K562 (cell line): ENCODE measurements at regions of chr1 and their contacts with region 1.

Region 1: DNA sequence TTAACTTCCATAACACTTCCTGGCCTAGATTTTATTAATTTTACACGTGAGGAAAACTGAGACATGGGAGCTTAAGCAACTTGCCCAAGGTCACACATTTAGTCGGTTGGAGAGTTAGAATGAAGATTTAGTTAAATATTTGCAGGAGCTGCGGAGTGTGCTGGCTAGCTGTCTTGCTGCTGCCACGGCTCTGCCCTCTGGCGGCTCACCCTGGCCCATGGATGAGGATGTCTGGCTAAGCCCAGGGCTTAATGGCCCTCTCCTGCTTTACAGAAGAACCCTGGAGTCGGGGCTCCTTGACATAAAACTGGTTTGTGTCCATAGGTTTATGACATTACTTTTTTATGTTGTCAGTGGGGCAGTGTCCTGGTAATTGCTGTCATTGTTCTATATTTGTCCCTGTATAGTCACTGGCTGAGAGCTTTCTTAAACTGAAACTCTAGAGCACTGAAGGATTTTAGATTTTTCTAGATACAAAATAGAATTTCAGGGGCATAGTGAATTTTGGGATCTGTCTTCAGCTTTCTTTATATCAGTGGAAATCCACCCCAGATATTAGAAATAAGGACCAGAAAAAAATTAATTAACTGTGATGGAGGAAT is 88.9 kb upstream of the WLS start:
- DNase-seq: peak; percentile 13 to 39 (median 26)
- ATAC-seq: peak; percentile 90
- H3K4me3 ChIP-seq: no peak overlapping the region
- H3K27ac ChIP-seq: no peak overlapping the region
- H3K4me1 ChIP-seq: no peaks in the 10 kb centered on the region
- H3K27me3 ChIP-seq: peaks cover 0 to 4% of the 10 kb centered on the region in 2 experiments; a peak in 2 of 5 replicates
- CTCF ChIP-seq: peak; percentile 50 to 57 (median 56); a peak in 5 of 6 replicates
- EP300 ChIP-seq: no peak
- POLR2A ChIP-seq: no peak
- RAD21 ChIP-seq: peak; percentile 63 to 66

Region 2: GRCh38 chr1:68120136-68120791 is 200.9 kb before region 1 on chr1:
- CTCF ChIA-PET with region 1: interaction called, 6 read pairs
- POLR2A ChIA-PET with region 1: interaction called, 3 read pairs
- in situ Hi-C with region 1: no loop called
- intact Hi-C with region 1: loop called (anchors 5 kb)
- DNase-seq: peak; percentile 55 to 70 (median 66)
- ATAC-seq: peak; percentile 85
- H3K4me3 ChIP-seq: no peak overlapping the region
- H3K27ac ChIP-seq: no peak overlapping the region
- H3K4me1 ChIP-seq: no peaks in the 10 kb centered on the region
- H3K27me3 ChIP-seq: 0 out of 5 replicates have a peak, but pooled peaks cover 0 to 4% of the 10 kb centered on the region in 2 experiments
- CTCF ChIP-seq: peak; percentile 63 to 85 (median 80)
- EP300 ChIP-seq: no peak
- POLR2A ChIP-seq: no peak
- RAD21 ChIP-seq: peak; percentile 82 to 88

Region 3: DNA sequence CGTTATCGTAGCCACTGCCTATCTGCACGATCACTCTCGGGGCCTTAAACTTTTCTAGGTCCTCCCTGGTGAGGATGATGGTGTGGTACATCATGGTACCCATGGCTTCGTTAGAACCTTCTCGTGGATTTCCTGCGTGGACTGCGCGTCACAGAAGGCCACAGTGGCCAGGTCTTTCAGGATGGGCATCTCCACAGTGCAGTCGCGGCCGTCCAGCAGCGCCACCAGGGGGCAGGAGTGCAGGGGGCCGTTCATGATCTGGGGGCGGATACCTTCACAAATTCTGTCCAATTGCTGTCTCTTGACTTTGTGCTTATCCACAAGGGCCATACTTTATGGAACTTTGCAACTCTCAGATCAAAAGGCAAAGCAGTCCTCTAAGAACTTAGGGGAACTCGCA is 158.4 kb before region 1 on chr1:
- CTCF ChIA-PET with region 1: no interaction called
- POLR2A ChIA-PET with region 1: no interaction called
- in situ Hi-C with region 1: no loop called
- intact Hi-C with region 1: loop called (anchors 1 kb)
- DNase-seq: peak; percentile 10 to 40 (median 18)
- ATAC-seq: peak; percentile 98
- H3K4me3 ChIP-seq: no peak overlapping the region
- H3K27ac ChIP-seq: no peak overlapping the region
- H3K4me1 ChIP-seq: peaks cover 0 to 3% of the 10 kb centered on the region in 2 experiments; a peak in 1 of 5 replicates
- H3K27me3 ChIP-seq: peaks cover 4 to 13% of the 10 kb centered on the region in 2 experiments; a peak in 2 of 5 replicates
- CTCF ChIP-seq: peak; percentile 46 to 67 (median 64)
- EP300 ChIP-seq: no peak
- POLR2A ChIP-seq: no peak
- RAD21 ChIP-seq: peak; percentile 21 to 65; a peak in 3 of 4 replicates

Region 4: DNA sequence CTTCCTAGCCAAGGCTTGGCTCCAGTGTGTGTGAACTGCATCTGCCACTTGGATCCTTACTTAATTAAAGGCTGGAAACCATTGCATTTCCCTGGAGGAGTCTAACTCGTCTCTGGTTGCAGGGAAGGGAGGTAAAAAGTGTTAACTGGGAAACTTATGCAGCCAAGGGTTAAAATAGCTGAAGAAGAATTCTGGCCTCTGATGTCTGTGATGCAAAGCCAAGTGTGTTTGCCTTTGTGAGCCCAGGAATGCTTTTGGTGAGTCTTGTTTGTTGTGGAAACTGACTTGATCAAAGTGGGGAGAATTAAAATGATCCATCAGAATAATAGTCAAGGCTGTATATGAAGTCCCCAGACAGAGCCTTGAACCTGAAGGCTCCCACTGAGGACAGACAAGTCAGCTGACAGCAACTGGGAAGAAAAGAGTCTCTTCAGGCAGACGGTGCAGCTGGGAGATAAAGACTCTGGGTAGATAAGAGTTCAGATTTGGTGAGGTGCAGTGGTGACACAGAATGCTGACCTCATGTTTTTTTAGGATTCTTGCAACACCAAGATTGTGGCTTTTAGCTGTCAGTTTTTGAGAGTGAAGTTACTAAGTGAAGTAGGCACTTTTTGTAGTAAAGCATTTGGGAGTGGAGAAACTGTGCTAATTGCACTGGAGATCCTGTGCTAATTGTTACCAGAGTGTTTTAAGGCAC is 29.3 kb before region 1 on chr1:
- CTCF ChIA-PET with region 1: no interaction called
- POLR2A ChIA-PET with region 1: no interaction called
- in situ Hi-C with region 1: no loop called
- intact Hi-C with region 1: no loop called
- DNase-seq: peak in 2 of 4 experiments; percentile 44 to 61
- ATAC-seq: peak; percentile 81
- H3K4me3 ChIP-seq: no peak overlapping the region
- H3K27ac ChIP-seq: no peak overlapping the region
- H3K4me1 ChIP-seq: no peaks in the 10 kb centered on the region; a peak in 2 of 5 replicates
- H3K27me3 ChIP-seq: peaks cover 9 to 29% of the 10 kb centered on the region in 2 experiments; a peak in 4 of 5 replicates
- CTCF ChIP-seq: no peak
- EP300 ChIP-seq: peak; percentile 67
- POLR2A ChIP-seq: no peak
- RAD21 ChIP-seq: no peak

Region 5: GRCh38 chr1:68307378-68307787 is 13.8 kb before region 1 on chr1:
- CTCF ChIA-PET with region 1: no interaction called
- POLR2A ChIA-PET with region 1: no interaction called
- in situ Hi-C with region 1: no loop called
- intact Hi-C with region 1: no loop called
- DNase-seq: no peak
- ATAC-seq: no peak
- H3K4me3 ChIP-seq: no peak overlapping the region
- H3K27ac ChIP-seq: no peak overlapping the region
- H3K4me1 ChIP-seq: no peaks in the 10 kb centered on the region
- H3K27me3 ChIP-seq: 0 out of 5 replicates have a peak, but pooled peaks cover 0 to 3% of the 10 kb centered on the region in 2 experiments
- CTCF ChIP-seq: no peak
- EP300 ChIP-seq: no peak
- POLR2A ChIP-seq: no peak
- RAD21 ChIP-seq: no peak